CD4-positive, alpha-beta T cell (primary cell): ENCODE measurements at regions of chr22 and their contacts with region 1.

Region 1: DNA sequence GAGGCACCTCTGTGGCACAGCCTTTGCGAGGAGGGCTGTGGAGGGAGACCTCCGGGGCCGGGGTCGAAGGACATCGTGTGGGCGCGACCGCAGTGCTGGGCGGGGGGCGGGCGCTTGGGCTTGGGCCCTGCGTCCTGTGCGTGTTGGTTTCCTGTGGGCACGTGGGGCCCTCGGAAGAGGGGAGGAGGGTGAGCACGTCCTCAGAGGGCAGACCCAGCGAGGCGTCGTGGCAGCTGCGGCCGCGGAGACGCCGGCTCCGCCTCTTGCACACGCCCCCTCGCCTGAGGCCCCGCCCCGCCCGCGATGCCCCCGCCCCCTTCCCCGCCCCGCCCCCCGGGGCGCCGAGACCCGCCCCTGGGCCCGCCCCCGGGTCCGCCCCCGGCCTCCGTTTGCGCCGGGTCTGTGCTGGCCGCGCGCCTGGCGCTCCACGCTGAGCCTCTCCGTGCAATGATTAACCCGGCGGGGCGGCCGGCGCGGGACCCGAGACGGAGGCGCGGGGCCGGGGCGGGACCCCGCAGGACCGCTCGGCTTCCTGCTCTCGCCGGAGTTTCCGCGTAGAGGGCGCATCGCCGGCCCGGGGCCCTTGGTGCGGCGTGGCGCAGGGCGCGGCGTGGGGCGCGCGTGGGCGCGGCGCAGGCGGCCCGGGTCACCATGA is at the start of gene PRR5:
- DNase-seq: peak; percentile 63 to 94 (median 80)
- ATAC-seq: peak; percentile 89
- H3K4me3 ChIP-seq: peak within 1 kb of the TSS; percentile 56
- H3K4me3 Mint-ChIP-seq: peak within 1 kb of the TSS; percentile 81
- H3K27ac ChIP-seq: peak within 1 kb of the TSS; percentile 65 to 73
- H3K27ac Mint-ChIP-seq: peak within 1 kb of the TSS; percentile 56
- H3K4me1 ChIP-seq: peaks cover 55% of the 10 kb centered on the region
- H3K4me1 Mint-ChIP-seq: peaks cover 12% of the 10 kb centered on the region
- H3K27me3 ChIP-seq: no peaks in the 10 kb centered on the region
- H3K27me3 Mint-ChIP-seq: no peaks in the 10 kb centered on the region
- CTCF ChIP-seq: no peak
- total RNA-seq, gene PRR5: 29.0 to 31.6 TPM

Region 2: DNA sequence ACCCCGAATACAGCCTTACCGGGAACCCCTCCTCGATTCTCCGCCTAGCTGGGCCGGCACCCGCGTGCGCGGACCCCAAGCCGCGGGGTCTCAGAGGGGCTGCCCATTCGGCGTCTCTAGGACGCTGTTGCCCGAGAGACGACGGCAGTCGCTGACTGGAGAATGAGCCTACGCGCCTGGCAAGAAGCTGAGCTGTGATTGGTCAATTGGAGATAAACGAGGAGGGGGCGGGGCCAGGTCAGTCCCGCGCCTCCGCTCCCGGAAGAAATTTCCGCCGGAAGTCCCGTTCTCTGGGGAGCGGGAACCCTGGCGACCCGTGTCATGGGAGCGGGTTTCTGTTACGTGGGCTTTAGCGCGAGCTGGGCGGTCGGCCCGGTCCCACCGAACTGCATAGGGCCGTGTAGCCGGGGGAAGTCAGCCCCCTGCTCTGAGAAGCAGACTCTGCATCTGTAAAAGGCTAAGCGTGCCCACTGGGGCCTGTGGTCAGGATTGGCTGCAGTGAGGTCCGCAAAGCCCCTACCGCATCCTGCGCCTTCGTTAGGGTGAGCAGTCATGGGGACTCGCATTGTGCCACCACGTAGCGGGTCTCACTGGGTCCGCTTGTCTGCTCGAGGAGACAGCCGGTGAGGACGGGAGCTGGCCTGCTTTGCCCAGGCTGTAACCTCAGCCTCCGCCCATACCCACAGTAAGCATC is 889.7 kb before region 1 on chr22 and contains the start of gene EFCAB6:
- CTCF ChIA-PET with region 1: no interaction called
- POLR2A ChIA-PET with region 1: no interaction called
- intact Hi-C with region 1: loop called in 1 of 2 experiments (anchors 5 kb)
- DNase-seq: peak; percentile 80 to 96 (median 86)
- ATAC-seq: peak; percentile 84
- H3K4me3 ChIP-seq: peak within 1 kb of the TSS; percentile 94
- H3K4me3 Mint-ChIP-seq: peak within 1 kb of the TSS; percentile 96
- H3K27ac ChIP-seq: peak within 1 kb of the TSS; percentile 51 to 59
- H3K27ac Mint-ChIP-seq: peak within 1 kb of the TSS; percentile 88
- H3K4me1 ChIP-seq: peaks cover 17% of the 10 kb centered on the region
- H3K4me1 Mint-ChIP-seq: peaks cover 27% of the 10 kb centered on the region
- H3K27me3 ChIP-seq: no peaks in the 10 kb centered on the region
- H3K27me3 Mint-ChIP-seq: no peaks in the 10 kb centered on the region
- CTCF ChIP-seq: no peak
- total RNA-seq, gene EFCAB6: 0.17 to 0.36 TPM

Region 3: DNA sequence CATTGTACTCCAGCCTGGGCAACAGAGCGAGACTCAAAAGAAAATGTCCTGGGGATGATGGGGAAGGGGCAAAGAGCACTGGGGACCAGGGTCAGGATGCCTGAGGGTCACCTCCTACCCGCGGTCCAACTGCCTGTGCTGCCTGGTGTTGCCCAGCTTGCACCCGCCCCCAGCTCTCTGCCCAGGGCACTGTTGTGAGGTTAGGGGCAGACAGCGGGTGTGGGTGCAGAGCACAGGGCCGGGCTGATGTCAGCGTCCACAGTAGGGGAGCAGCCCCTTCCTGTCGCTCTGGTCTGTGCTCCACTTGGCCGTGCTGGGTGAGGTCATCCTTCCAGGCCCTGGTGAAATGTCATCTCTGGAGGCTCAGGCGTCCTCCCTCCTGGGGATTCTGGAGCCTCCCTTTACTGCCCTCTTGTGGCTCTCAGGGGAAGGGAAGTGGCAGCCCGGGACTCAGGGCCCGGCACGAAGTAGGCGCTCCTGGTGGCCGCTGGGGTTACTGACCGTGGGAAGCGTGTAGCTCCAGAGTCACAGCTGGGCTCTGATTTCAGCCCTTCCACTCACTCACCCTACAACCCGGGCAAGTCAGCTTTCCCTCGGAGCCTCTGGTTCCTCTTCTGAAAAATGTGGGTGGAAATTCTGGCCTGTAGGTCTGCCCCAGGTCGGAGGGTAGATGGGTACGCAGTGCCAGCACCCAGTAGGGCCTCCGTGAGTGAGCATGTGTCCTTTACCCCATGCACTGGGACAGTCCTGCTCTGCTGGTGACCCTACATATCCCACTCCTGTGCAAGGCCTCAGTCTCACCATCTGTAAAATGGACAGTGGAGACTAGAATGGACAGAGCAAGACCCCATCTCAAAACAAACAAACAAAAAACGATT is 17.2 kb before region 1 on chr22:
- CTCF ChIA-PET with region 1: interaction called, 6 read pairs
- POLR2A ChIA-PET with region 1: no interaction called
- intact Hi-C with region 1: loop called in 1 of 2 experiments (anchors 1 kb)
- DNase-seq: peak; percentile 69 to 93 (median 78)
- ATAC-seq: peak; percentile 85
- H3K4me3 ChIP-seq: peak overlapping the region; percentile 13
- H3K4me3 Mint-ChIP-seq: peak overlapping the region; percentile 50
- H3K27ac ChIP-seq: no peak overlapping the region
- H3K27ac Mint-ChIP-seq: peak overlapping the region; percentile 24
- H3K4me1 ChIP-seq: peaks cover 57% of the 10 kb centered on the region
- H3K4me1 Mint-ChIP-seq: peaks cover 32% of the 10 kb centered on the region
- H3K27me3 ChIP-seq: no peaks in the 10 kb centered on the region
- H3K27me3 Mint-ChIP-seq: no peaks in the 10 kb centered on the region
- CTCF ChIP-seq: peak; percentile 98

Region 4: DNA sequence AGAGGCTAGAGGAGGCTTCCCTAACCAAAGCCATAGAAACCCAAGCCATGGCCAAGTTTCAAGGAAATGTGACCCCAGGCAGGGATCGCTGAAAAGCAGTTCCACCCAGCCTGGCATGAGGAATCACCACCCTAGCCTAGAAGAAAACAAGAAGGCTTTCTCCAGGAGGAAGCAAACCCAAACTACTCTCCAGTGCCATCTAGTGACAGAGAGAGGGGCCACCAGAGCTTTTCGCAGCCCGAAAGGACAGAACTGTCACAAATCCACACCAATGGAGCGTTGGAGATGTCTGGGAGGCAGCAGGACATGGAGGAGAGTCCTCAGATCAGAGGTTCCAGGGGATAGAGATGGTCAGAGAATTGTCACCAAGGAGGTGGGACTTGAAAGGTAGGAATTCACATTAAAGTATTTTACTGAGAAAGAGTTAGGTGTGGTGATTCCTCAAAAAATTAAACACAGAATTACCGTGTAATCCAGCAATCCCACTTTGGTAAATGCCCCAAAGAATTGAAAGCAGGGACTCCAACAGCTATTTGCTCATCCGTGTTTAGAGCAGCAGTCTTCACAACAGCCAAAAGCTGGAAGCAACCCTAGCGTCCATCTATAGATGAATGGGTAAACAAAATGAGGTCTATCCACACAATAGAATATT is 394.4 kb after region 1 on chr22:
- CTCF ChIA-PET with region 1: no interaction called
- POLR2A ChIA-PET with region 1: no interaction called
- intact Hi-C with region 1: loop called in 1 of 2 experiments (anchors 5 kb)
- DNase-seq: peak in 13 of 14 experiments; percentile 8 to 59 (median 20)
- ATAC-seq: peak; percentile 44
- H3K4me3 ChIP-seq: no peak overlapping the region
- H3K4me3 Mint-ChIP-seq: no peak overlapping the region
- H3K27ac ChIP-seq: no peak overlapping the region
- H3K27ac Mint-ChIP-seq: no peak overlapping the region
- H3K4me1 ChIP-seq: no peaks in the 10 kb centered on the region
- H3K4me1 Mint-ChIP-seq: no peaks in the 10 kb centered on the region
- H3K27me3 ChIP-seq: peaks cover 0 to 5% of the 10 kb centered on the region in 2 experiments
- H3K27me3 Mint-ChIP-seq: peaks cover 47% of the 10 kb centered on the region
- CTCF ChIP-seq: peak; percentile 59

Region 5: DNA sequence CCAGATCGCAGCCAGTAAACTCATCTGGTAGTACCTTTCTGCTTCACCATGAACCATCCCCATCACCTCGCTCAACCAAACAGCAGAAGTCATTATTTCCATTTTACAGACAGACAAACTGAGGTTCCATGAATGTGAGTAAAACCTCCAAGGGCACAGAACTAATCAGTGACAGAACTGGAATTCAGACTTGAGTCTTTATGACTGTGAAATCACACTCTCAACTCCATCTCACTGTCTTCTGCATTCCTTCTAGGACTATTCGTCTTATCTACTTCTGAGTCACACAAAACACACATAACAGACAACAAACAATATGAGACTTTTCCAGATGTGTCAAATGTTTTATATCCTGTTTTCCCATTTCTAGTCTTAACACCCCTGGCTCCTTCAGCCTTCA is 452.4 kb after region 1 on chr22:
- CTCF ChIA-PET with region 1: no interaction called
- POLR2A ChIA-PET with region 1: no interaction called
- intact Hi-C with region 1: no loop called
- DNase-seq: no peak
- ATAC-seq: no peak
- H3K4me3 ChIP-seq: no peak overlapping the region
- H3K4me3 Mint-ChIP-seq: no peak overlapping the region
- H3K27ac ChIP-seq: no peak overlapping the region
- H3K27ac Mint-ChIP-seq: no peak overlapping the region
- H3K4me1 ChIP-seq: peaks cover 4% of the 10 kb centered on the region
- H3K4me1 Mint-ChIP-seq: peaks cover 5% of the 10 kb centered on the region
- H3K27me3 ChIP-seq: no peaks in the 10 kb centered on the region
- H3K27me3 Mint-ChIP-seq: no peaks in the 10 kb centered on the region
- CTCF ChIP-seq: no peak

Region 6: GRCh38 chr22:45240810-45241631 is 539.1 kb after region 1 on chr22 and contains the start of gene KIAA0930:
- CTCF ChIA-PET with region 1: no interaction called
- POLR2A ChIA-PET with region 1: no interaction called
- intact Hi-C with region 1: loop called in 1 of 2 experiments (anchors 2 kb)
- DNase-seq: peak; percentile 70 to 89 (median 76)
- ATAC-seq: peak; percentile 62
- H3K4me3 ChIP-seq: peak within 1 kb of the TSS; percentile 72
- H3K4me3 Mint-ChIP-seq: peak within 1 kb of the TSS; percentile 94
- H3K27ac ChIP-seq: peak within 1 kb of the TSS; percentile 32 to 52
- H3K27ac Mint-ChIP-seq: peak within 1 kb of the TSS; percentile 90
- H3K4me1 ChIP-seq: peaks cover 39% of the 10 kb centered on the region
- H3K4me1 Mint-ChIP-seq: peaks cover 19% of the 10 kb centered on the region
- H3K27me3 ChIP-seq: no peaks in the 10 kb centered on the region
- H3K27me3 Mint-ChIP-seq: no peaks in the 10 kb centered on the region
- CTCF ChIP-seq: no peak
- total RNA-seq, gene KIAA0930: 6.7 to 7.4 TPM